ENCODE measurements at regions of chr5 and their contacts with region 1.

Region 1: DNA sequence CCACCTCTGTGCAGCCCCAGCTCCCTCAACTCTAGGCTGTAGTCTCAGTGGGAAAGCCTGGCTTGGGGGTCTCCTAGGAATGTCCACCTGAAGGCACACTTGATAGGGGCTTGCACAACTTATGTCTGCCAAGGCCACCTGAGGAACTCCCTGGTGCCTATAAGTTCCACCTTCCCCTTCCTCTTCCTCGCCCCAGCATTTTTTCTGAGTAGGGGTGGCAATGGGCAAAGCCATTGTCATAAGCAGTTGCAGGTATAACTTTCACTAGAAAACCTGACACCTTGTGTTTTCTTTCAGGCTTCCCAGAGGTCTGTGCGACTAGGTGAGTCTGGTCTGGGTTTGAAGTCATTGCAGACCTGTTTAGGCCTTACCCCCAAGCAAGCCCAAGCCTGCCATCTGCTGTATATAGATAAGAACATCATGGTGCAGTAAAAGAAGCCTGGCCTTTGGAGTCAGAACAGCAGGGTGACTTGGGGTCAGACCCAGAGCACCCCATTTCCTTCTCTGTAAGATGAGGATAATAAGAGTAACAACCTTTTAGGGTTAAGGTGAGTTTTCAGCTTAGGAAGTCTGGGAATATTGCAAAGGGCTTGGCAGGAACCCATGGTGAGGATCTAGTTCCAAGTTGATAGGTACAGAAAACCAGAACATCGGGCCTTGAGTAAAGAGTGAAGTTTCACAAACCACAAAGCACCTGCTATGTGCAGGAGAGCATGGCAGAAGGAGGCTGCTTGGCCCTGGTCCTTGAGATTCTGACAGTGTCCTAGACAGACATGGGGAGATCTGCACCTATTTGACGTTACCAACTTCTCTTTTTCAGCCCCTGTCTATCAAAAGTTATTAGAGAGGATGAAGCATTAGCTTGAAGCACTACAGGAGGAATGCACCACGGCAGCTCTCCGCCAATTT is 33.8 kb downstream of the TGFBI start:
- H3K4me3 ChIP-seq: no peak overlapping the region
- H3K27ac ChIP-seq: no peak overlapping the region
- H3K4me1 ChIP-seq: peaks cover 6% of the 10 kb centered on the region
- CTCF ChIP-seq: no peak

Region 2: DNA sequence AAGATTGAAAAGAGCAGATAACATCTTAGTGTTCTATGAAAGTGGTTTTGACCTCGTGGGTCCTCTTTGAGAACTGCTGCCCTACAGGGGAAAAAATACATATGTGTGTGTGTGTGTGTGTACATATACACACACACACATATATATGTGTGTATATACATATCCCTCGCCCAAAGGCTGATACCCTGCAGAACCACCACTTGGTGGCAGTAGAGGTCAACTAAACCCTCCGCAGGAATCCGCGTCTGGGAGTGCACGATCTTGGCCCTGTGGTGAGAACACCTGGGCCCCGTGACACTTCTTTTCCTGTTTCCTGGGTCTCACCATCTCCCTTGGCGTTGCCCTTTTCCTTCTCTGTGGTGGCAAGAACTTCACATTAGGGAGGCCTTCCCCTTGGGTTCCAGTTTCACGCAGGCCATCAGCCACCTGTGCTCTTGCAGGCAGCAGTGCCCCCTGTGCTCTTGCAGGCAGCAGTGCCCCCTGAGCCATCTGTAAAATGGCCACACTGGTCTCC is 175.2 kb before region 1 on chr5:
- CTCF ChIA-PET with region 1: interaction called, 58 read pairs
- POLR2A ChIA-PET with region 1: interaction called, 5 read pairs
- H3K4me3 ChIP-seq: no peak overlapping the region
- H3K27ac ChIP-seq: no peak overlapping the region
- H3K4me1 ChIP-seq: peaks cover 12% of the 10 kb centered on the region
- CTCF ChIP-seq: peak; percentile 88

Region 3: GRCh38 chr5:135977375-135977928 is 85.2 kb before region 1 on chr5:
- CTCF ChIA-PET with region 1: interaction called, 19 read pairs
- POLR2A ChIA-PET with region 1: interaction called, 3 read pairs
- H3K4me3 ChIP-seq: no peak overlapping the region
- H3K27ac ChIP-seq: no peak overlapping the region
- H3K4me1 ChIP-seq: no peaks in the 10 kb centered on the region
- CTCF ChIP-seq: peak; percentile 67; the same call in 1 of the 2 replicates

Region 4: GRCh38 chr5:136011414-136012001 is 51.1 kb before region 1 on chr5:
- CTCF ChIA-PET with region 1: interaction called, 15 read pairs
- POLR2A ChIA-PET with region 1: interaction called, 5 read pairs
- H3K4me3 ChIP-seq: no peak overlapping the region
- H3K27ac ChIP-seq: no peak overlapping the region
- H3K4me1 ChIP-seq: peaks cover 30% of the 10 kb centered on the region
- CTCF ChIP-seq: no peak

Region 5: DNA sequence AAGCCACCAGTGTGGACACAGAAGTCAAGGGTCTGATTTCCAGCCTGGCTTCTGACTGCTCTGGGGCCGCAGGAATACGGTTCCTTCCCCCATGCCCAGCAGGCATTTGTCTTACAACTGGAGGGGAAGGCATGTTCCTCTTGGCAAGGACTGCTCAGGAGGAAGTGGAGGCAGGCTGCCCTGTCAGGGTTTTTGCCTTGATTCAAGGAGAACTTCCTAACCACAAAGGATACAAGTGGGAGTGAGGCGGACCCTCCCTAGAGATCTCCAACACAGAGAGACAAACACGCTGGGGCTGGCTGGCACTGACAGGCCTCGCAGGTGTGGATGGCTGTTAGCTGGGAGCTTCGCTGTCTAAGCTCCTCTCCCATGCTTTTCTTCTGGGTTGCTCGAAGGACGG is 14.8 kb before region 1 on chr5:
- CTCF ChIA-PET with region 1: interaction called, 21 read pairs
- POLR2A ChIA-PET with region 1: no interaction called
- H3K4me3 ChIP-seq: no peak overlapping the region
- H3K27ac ChIP-seq: no peak overlapping the region
- H3K4me1 ChIP-seq: peaks cover 2% of the 10 kb centered on the region; the same call in 1 of the 2 replicates
- CTCF ChIP-seq: no peak

Region 6: DNA sequence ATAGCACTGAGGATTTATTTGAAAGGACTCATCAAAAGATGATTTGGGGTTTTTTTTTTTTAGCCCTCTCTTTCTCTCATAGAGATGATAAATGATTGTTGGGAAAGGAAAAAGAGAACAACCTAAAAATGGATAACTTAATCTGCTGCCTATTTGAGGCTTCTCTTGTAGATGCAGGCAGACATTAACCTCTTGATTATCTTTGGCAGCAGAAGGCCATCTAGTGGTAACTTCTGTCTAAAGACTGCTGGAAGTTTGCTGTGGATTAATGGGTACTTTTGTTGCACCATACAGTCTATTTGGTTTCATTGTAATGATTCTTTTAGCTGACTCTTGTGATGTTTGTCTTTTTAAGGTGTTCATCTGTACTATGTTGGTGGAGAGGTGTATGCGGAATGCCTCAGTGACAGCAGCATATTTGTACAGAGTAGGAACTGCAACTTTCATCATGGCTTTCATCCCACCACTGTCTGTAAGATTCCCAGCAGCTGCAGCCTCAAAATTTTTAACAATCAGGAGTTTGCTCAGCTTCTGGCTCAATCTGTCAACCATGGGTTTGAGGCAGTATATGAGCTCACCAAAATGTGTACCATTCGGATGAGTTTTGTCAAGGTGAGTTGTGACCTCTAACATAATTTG is 111.5 kb after region 1 on chr5:
- CTCF ChIA-PET with region 1: interaction called, 11 read pairs
- POLR2A ChIA-PET with region 1: no interaction called
- H3K4me3 ChIP-seq: no peak overlapping the region
- H3K27ac ChIP-seq: no peak overlapping the region
- H3K4me1 ChIP-seq: no peaks in the 10 kb centered on the region
- CTCF ChIP-seq: peak; percentile 46

Region 7: GRCh38 chr5:137015540-137016116 is 953.0 kb after region 1 on chr5:
- CTCF ChIA-PET with region 1: no interaction called
- POLR2A ChIA-PET with region 1: no interaction called
- H3K4me3 ChIP-seq: no peak overlapping the region
- H3K27ac ChIP-seq: no peak overlapping the region
- H3K4me1 ChIP-seq: no peaks in the 10 kb centered on the region
- CTCF ChIP-seq: no peak

Measured in HEK293 (cell line).